ENCODE measurements at regions of chr13 and their contacts with region 1.

Region 1: DNA sequence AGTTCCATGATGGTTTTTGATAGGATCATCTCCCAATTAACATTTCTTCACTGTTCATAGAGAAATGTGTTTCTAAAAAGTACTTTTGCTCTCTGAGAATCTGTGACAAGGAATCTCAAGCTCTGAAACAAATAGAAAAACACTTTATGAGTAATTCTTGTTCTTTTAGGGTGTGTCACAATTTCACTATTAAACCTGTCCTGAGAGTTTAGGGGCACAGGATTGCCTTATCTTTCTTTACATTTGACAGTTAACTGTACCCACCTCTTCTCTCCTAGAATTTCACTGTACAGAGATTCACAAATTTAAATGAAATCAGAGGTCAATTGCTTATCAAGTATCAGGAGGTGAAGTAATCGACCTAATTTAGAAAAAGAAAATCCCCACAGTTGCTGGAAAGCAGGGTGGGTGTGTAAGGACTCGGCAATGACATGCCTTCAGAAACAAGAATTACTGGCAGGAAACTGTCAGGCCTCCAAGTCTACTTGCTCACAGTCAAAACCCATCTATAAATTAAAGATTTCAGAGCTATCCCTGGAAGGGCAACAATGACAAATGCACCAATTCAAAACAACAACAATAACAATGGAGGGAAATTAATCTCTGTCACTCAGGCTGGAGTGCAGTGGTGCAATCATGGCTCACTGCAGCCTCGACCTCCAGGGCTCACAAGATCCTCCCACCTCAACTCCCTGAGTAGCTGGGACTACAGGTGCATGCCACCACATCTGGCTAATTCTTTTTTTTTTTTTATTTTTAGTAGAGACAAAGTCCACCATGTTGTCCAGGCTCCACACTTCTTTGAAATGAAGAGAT is 250.2 kb downstream of the ABCC4 start:
- DNase-seq: no peak
- H3K4me3 Mint-ChIP-seq: no peak overlapping the region
- H3K27ac Mint-ChIP-seq: peak overlapping the region; percentile 93
- H3K4me1 Mint-ChIP-seq: peaks cover 24% of the 10 kb centered on the region
- H3K27me3 Mint-ChIP-seq: no peaks in the 10 kb centered on the region

Region 2: DNA sequence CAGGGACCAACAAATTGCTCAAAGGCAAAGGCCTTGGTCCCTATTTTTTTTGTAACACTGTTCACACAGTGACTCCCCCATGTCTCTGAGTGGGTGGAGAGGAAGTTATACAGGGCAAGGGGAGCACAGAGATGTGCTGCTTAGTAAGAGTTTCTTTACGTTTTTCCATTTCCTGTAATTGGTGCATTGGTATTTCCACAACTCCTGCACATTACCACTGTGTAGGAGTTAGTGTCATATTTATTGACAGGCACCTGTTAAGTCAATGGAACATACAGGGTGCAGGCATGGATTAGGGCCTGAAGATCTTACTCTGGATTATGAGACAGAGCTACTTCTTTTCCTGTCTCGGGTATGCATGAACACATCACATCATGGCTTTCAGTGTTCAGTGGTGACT is 383.8 kb before region 1 on chr13:
- intact Hi-C with region 1: loop called (anchors 2 kb)
- DNase-seq: no peak
- H3K4me3 Mint-ChIP-seq: peak overlapping the region; percentile 6
- H3K27ac Mint-ChIP-seq: peak overlapping the region; percentile 87
- H3K4me1 Mint-ChIP-seq: peaks cover 48% of the 10 kb centered on the region
- H3K27me3 Mint-ChIP-seq: peaks cover 9% of the 10 kb centered on the region

Region 3: GRCh38 chr13:95150555-95150954 is 99.5 kb after region 1 on chr13:
- intact Hi-C with region 1: loop called (anchors 1 kb)
- DNase-seq: no peak
- H3K4me3 Mint-ChIP-seq: no peak overlapping the region
- H3K27ac Mint-ChIP-seq: peak overlapping the region; percentile 3
- H3K4me1 Mint-ChIP-seq: peaks cover 23% of the 10 kb centered on the region
- H3K27me3 Mint-ChIP-seq: no peaks in the 10 kb centered on the region

Region 4: DNA sequence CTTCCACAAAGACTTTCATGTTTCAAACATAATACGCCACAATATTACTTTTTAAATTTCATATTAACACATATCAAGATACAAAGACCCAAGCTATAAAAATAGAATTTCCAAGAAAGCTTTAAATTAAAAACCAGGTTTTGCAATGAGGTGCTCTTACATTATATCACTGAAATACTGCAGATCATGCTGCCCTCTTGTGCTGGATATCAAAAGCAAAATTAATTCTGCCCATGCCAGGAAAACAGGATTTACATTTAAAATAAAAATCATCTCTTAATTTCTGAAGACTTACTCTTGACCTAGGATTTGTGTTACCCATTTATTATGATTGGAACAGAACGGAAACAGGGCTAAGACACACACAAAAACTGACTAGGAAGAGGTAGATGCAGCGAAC is 105.2 kb after region 1 on chr13:
- intact Hi-C with region 1: loop called (anchors 1 kb)
- DNase-seq: no peak
- H3K4me3 Mint-ChIP-seq: no peak overlapping the region
- H3K27ac Mint-ChIP-seq: no peak overlapping the region
- H3K4me1 Mint-ChIP-seq: peaks cover 30% of the 10 kb centered on the region
- H3K27me3 Mint-ChIP-seq: no peaks in the 10 kb centered on the region

Region 5: GRCh38 chr13:95480131-95480545 is 429.1 kb after region 1 on chr13:
- intact Hi-C with region 1: loop called (anchors 2 kb)
- DNase-seq: no peak
- H3K4me3 Mint-ChIP-seq: no peak overlapping the region
- H3K27ac Mint-ChIP-seq: no peak overlapping the region
- H3K4me1 Mint-ChIP-seq: peaks cover 17% of the 10 kb centered on the region
- H3K27me3 Mint-ChIP-seq: peaks cover 6% of the 10 kb centered on the region